ENCODE measurements at regions of chr13 and their contacts with region 1.

Region 1: DNA sequence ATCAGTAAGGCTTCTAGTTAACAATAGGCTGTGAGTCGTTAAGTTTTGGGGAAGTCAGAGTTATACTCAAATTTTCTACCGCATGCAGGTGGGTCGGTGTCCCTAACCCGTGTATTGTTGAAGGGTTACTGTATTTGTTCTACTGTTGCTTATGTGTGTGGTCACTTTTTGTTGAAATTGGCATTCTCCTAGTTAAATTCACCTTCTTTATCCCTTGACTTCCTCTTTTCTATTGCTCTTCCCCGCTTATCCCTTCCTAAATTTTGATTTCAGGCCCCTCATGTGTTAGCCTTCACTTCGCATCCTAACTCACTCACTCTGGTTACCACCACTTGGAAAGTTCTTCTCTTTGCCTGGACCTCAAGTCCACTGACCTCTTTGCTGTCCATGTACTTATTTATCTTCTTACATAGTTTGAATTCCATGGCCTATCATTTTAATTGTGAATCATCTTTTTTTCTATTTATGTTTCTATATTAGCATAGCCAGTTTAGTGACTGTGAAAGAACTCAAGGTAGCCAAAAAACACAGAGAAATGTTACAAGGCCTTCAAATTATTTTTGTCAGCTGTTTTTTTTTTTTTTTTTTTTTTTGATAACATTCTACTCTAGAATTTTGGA is 52.9 kb downstream of the NDFIP2 start:
- DNase-seq: no peak
- H3K4me3 ChIP-seq: no peak overlapping the region
- H3K27ac ChIP-seq: no peak overlapping the region
- H3K4me1 ChIP-seq: peaks cover 0 to 9% (median 0%) of the 10 kb centered on the region in 4 donors
- H3K27me3 ChIP-seq: no peaks in the 10 kb centered on the region
- CTCF ChIP-seq: no peak

Region 2: GRCh38 chr13:79434556-79434955 is 99.3 kb before region 1 on chr13:
- intact Hi-C with region 1: loop called (anchors 5 kb)
- DNase-seq: no peak
- H3K4me3 ChIP-seq: no peak overlapping the region
- H3K27ac ChIP-seq: no peak overlapping the region
- H3K4me1 ChIP-seq: peaks cover 0 to 14% (median 0%) of the 10 kb centered on the region in 4 donors
- H3K27me3 ChIP-seq: no peaks in the 10 kb centered on the region
- CTCF ChIP-seq: no peak

Region 3: DNA sequence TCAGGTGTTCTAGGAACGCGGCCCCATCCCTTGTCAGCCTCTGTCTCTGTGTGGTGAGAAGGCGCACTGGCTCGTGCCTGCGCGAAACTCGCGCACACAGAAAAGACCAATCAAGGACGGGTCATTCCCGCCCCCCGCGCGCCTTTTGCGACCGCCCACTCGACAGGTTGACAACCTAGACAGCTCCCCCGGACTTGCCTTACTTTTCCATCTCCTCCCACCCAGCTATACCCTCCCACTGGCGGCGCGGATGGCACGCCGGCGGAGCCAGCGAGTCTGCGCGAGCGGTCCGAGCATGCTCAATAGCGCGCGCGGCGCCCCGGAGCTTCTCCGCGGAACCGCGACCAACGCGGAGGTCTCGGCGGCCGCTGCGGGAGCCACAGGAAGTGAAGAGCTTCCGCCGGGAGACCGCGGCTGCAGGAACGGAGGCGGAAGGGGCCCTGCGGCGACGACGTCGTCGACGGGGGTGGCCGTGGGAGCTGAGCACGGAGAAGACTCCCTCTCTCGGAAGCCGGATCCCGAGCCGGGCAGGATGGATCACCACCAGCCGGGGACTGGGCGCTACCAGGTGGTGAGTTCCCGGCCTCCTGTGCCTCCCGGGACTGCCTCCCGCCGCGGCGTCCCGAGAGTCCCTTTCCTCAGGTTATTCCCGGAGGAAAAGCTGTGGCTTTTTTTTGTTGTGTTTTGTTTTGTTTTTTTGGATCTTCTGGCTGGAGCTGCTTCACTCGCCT is 52.8 kb before region 1 on chr13 and contains the start of gene NDFIP2:
- intact Hi-C with region 1: loop called (anchors 5 kb)
- DNase-seq: peak; percentile 74 to 88
- H3K4me3 ChIP-seq: peak within 1 kb of the TSS; percentile 67 to 75
- H3K27ac ChIP-seq: peak within 1 kb of the TSS; percentile 63 to 67
- H3K4me1 ChIP-seq: peaks cover 3 to 11% (median 9%) of the 10 kb centered on the region in 4 donors
- H3K27me3 ChIP-seq: no peaks in the 10 kb centered on the region
- CTCF ChIP-seq: no peak